GM12878 (cell line): ENCODE measurements at regions of chr2 and their contacts with region 1.

Region 1: DNA sequence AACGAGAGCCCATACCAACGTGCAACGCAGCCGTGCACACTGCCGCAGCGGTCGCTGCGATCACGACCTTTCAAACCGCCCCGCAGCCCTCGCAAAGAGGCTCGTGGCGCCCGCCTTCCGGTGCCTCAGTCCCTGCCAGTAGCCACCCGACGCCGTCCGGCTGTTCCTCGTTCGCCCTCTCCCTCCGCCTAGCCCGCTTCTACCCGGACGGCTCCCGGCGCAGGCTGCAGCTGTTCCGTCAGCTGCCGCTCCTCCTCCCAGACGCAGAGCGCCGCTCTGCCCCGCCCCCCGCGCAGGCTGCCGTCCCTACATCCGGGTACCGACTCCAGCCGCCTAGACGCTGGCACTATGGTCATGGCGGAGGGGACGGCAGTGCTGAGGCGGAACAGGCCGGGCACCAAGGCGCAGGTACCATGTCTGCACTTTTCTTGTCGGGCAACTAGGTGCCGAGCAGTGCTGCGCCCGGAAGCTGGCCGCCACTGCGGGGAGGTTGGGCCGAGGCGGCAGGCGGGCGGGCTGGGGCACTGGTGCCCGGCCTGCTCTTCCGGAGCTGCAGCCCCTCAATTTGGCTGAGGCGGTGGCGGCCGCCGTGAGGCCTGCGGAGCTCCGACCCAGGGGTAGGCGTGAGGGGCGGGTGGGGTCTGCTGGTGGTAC is at the start of gene MOB4:
- DNase-seq: peak; percentile 82
- ATAC-seq: peak; percentile 95
- H3K4me3 ChIP-seq: peak within 1 kb of the TSS; percentile 99
- H3K27ac ChIP-seq: peak within 1 kb of the TSS; percentile 95
- H3K4me1 ChIP-seq: peaks cover 7% of the 10 kb centered on the region
- H3K27me3 ChIP-seq: no peaks in the 10 kb centered on the region
- CTCF ChIP-seq: no peak
- EP300 ChIP-seq: peak in 1 of 2 experiments; percentile 99; a peak in 2 of 4 replicates
- POLR2A ChIP-seq: peak; percentile 98
- RAD21 ChIP-seq: no peak
- polyA plus RNA-seq, gene MOB4: 40.6 to 43.4 TPM

Region 2: GRCh38 chr2:197434541-197435513 is 81.0 kb before region 1 on chr2 and contains the start of gene SF3B1:
- CTCF ChIA-PET with region 1: no interaction called
- POLR2A ChIA-PET with region 1: interaction called, 16 read pairs
- RAD21 ChIA-PET with region 1: interaction called, 3 read pairs
- SMC1A ChIA-PET with region 1: interaction called, 6 read pairs
- in situ Hi-C with region 1: no loop called
- intact Hi-C with region 1: no loop called
- DNase-seq: peak; percentile 95
- ATAC-seq: peak; percentile 91
- H3K4me3 ChIP-seq: peak within 1 kb of the TSS; percentile 92
- H3K27ac ChIP-seq: peak within 1 kb of the TSS; percentile 99
- H3K4me1 ChIP-seq: peaks cover 4% of the 10 kb centered on the region; the same call in 1 of the 2 replicates
- H3K27me3 ChIP-seq: no peaks in the 10 kb centered on the region
- CTCF ChIP-seq: no peak
- EP300 ChIP-seq: peak in 1 of 2 experiments; percentile 51; a peak in 1 of 4 replicates
- POLR2A ChIP-seq: peak; percentile 93
- RAD21 ChIP-seq: no peak
- polyA plus RNA-seq, gene SF3B1: 163 to 170 TPM